Right ventricle myocardium inferior (tissue), 1 donor: ENCODE measurements at regions of chr14 and their contacts with region 1.

Region 1: DNA sequence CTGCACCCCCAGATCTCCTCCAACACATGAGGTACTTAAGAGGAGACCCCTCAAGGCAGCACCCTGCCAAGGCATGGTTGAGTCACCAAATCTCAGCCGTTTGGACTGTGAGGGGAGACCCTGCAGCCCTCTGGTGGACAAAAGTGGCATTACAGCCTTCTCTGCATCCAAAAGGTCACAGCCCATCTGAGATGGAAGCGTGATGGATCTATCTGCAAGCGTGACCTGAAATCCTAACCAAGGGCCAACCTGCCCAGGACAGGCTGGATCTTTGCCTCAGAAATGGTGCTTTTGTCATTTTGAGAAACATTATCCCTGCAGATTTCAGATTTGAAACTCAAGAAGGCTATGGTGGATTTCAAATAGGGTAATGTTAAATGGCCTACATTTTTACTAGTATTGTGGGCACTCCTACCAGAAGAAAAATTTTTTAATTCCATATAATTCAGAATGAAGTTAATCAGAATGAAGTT is 23.7 kb upstream of the DHRS4 start:
- DNase-seq: no peak
- ATAC-seq: peak; percentile 77

Region 2: GRCh38 chr14:23588884-23589598 is 340.8 kb before region 1 on chr14:
- intact Hi-C with region 1: loop called (anchors 1 kb)
- DNase-seq: peak; percentile 91
- ATAC-seq: peak; percentile 83

Region 3: DNA sequence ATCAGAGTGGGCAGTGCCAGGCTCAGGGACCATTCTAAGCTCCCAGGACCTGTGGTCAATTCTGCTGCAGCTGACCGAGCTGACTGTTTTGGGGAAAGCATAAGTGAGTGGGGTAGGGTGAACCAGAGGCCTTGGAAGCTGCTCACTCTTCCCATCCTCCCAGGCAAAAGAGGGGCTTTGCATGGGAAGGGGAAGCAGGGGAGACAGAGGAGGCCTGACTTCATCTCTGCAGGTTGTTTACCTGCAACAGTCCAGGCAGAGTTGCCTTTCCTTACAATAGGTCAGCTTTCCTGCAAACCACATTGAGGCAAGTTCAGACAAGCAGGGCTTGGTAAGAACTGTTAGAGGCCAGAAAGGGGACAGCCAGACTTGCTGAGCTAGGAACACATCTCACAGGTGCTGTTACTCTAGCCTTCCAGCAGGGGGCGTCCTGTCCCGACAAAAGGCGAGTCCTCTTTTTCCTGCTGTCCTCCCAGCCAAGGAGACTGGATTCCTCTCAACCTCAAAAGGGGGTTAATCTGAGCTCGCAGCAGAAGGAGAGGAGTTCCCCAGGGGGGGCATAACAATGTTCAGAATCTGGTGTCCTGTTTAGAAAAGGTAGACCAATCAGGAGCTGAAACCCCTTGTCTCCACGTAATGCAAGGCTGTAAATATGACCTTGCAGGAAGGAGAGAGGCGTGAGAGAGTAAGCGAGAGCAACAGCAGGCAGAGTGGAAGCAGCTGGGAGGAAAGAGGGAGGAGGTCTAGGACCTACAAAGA is 298.0 kb before region 1 on chr14:
- intact Hi-C with region 1: loop called (anchors 1 kb)
- DNase-seq: no peak
- ATAC-seq: peak; percentile 90

Region 4: DNA sequence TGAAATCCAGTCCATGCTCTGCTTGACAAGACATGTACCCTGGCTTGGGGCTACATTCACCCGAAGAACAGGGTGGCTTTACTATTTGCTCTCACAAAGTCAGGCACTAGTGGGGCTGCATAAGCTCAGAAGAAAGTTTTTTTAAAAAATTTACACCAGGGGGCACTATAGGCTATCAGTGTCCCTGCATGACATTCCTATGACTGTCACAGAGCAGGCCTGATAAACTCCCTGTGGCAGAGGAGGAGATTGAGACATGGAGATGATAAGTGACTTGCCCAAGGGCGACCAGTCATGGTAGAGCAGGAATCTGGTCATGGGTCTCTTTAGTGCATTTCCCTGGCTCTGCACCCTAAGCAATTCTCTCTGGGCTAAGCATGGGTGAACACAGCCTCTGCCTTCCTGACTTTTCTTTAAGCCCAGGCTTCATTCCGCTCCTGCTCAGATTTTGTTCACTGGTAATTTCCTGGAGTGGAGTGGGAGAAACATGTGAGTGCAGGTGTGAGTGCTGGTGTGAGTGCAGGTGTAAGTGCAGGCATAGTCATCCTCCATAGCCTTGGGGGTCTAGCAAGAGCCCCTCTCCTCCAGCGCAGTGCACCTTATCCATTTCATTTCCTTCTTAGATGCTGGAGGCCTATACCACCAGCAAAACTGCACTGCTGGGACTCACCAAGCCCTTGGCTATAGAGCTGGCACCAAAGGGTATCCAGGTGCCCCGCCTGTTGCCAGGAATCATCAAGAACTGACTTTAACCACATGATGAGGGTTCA is 202.1 kb before region 1 on chr14:
- intact Hi-C with region 1: loop called (anchors 10 kb)
- DNase-seq: no peak
- ATAC-seq: peak; percentile 42

Region 5: GRCh38 chr14:23751616-23752015 is 178.2 kb before region 1 on chr14:
- intact Hi-C with region 1: no loop called
- DNase-seq: no peak
- ATAC-seq: no peak

Region 6: GRCh38 chr14:24171422-24172260 is 241.8 kb after region 1 on chr14 and contains the start of gene REC8:
- intact Hi-C with region 1: no loop called
- DNase-seq: peak; percentile 78
- ATAC-seq: peak; percentile 63
- total RNA-seq, gene REC8: 2.4 TPM